Right ventricle myocardium superior (tissue), 1 donor: ENCODE measurements at regions of chrX and their contacts with region 1.

Region 1: DNA sequence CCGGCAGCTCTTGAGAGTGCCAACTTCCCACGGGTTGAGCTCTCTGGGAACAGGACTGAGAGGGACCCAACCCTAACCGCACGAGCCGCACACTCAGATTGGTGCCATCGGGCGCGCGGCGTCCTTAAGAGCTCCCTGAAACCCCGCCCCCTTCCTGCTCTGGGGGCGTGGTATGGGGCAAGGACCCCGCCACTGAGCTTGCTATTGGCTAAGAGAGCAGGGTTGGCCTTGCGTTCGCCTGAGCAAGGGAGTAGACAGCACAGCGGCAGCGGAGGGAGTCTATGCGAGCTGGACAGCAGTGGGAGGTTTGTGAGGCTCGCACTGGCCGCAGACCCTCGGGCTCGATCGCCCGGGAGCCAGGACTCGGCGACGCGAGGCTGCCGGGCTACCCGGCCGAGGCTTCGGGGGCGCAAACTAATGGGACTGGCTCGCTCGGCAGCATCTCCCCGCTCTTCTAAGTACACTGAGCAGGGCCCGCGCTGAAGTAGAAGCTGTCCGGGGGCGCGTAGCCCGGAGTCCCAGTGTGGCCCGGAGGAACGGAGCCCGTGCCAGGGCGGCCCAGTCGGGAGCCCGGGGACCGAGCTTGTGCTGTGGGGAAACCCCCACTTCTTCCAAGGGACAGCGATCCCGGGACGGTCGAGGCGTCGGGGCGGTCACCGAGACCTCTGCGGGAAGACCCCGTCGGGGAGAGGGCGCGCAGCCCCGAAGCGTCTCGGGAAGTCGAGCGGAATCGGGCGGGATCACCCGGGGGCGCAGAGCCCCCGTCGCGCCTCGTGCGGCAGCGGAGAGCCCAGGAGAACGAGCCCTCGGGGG is at the start of gene EFNB1:
- DNase-seq: peak; percentile 95
- ATAC-seq: peak; percentile 92
- total RNA-seq, gene EFNB1: 15.1 TPM

Region 2: GRCh38 chrX:68894513-68895340 is 65.8 kb after region 1 on chrX:
- intact Hi-C with region 1: loop called (anchors 10 kb)
- DNase-seq: peak; percentile 80
- ATAC-seq: peak; percentile 87

Region 3: DNA sequence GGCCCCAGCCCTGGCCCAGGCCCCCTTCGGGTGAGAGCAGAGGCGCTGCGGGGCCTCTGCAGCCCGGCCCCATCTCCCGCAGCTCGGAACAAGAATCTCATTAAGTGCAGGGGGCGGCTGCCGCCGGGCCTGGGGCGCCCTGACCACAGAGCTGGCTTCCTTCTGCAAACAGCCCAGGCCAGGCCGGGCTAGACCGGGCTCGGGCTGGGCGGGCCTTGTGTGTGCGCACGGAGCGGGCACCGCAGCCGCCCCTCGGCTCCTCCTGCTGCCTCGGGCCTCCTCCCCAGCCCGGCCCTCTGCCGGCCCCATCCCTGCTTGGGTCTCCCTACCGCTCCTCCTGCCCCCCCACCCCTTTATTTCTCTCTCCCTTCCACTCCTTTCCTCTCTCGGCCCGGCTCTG is 83.2 kb after region 1 on chrX:
- intact Hi-C with region 1: no loop called
- DNase-seq: no peak
- ATAC-seq: no peak

Region 4: GRCh38 chrX:68945603-68946228 is 116.8 kb after region 1 on chrX:
- intact Hi-C with region 1: no loop called
- DNase-seq: no peak
- ATAC-seq: no peak

Region 5: DNA sequence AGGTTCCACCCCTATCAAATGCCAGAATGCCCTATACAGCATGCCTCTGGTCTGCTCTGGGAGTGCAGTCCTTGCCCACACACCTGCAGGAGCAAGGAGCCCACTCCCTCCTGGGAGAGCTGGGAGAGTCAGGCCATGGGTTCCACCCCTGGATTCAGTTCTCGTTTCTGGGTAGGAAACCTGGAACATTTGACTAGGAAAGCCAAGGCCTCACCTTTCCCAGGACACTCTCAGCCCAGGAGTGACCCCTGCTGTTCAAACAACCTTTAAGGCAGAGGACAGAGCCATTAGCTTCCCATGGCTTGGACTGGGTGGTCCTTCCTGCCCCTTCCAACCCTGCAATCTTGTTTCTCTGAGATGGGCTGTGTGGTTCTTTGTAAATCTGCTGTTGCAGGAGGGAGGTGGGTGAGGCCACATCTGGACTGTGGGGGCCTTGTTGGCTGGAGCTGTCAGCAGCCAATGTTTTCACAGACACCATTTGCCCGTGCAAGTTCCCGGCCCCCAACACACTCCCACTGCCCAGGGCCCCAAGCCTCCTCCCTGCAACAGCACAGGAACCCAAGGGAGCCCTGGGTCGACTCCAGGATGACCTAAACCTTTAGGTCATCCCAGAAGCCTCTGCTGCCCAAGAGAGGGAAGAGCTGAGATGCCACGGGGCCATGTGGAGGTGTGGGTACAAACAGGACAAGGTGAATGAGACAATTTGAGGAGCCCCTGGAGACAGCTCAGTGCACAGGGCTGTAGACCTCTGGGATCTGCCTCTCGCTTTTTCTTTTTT is 231.9 kb after region 1 on chrX:
- intact Hi-C with region 1: loop called (anchors 2 kb)
- DNase-seq: no peak
- ATAC-seq: peak; percentile 86

Region 6: DNA sequence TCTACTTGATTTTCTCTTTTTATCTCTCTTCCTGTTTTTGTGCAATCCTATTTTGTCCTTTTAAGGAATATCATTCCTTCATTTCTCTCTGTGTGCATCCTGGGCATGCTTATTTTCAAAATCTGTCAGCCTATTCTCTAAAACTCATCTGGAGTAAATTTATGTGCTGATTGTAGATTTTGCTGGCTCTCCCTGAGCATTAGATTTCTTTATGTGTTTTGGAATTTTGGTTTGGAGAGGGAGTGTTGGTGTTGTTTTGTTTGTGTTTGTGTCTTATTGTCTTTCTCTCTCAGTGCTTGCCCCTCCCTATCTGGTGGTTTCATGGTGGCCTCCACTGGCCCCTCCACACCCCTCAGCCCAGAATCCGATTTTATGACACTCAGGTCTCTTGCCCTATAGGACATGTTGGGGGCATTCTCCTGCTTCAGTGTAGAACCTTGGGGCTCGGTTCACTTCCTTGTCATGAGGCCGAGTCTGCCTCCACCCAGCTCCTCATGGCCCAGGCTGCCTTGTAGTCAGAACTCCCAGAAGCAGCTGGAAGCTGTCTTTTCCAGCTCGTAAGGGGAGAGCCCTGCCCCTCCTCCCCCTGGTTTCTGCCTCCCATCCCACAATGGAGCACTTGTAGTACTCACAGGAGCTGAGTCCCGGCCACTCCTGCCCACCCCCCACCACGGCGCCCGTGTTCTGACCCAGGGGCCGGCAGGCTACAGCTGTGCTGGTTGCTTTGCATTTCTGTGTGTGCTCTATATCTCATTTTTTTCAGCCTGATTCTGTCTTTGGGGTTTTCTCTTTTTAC is 360.8 kb after region 1 on chrX:
- intact Hi-C with region 1: no loop called
- DNase-seq: peak; percentile 61
- ATAC-seq: peak; percentile 58